Naive thymus-derived CD4-positive, alpha-beta T cell (primary cell): ENCODE measurements at regions of chr10 and their contacts with region 1.

Region 1: DNA sequence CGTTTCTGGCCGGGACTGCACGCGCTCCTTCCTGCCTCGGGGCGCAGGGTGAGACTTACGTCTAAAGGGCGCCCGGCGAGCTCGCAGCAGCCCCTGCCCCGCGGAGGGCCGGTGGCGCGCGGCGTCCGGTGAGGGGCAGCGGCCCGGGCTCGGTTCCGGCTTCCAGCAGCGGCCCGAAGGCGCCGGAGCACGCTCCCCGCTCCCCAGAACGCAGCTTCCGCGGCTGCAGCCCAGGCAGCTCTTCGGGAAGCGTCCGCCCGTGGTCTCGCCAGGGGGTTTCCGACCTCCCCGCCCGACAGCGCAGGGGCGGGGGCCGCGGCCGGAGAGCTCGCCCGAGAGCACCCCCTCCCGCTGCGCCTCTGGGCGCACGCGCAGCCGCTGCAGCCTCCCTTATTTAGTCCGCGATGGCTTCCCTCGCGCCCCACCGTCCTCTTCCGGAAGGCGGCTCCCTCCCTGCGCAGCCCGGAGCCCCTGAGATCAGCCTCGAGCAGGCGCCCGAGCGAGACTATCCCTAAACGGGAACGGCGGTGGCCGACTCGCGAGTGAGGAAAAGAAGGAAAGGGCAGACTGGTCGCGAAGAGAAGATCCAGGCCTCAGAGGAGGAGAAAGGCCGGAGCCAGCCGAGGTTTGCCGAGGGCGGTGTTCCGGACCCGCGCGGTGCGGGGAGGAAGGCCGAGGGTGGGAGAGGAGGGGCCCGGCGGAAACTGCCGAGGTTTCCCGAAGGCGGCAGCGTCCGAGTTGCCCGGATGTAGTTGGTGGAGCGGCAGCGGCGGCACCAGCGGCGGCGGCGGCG is at the start of gene WAC:
- DNase-seq: peak; percentile 93 to 99 (median 97)
- ATAC-seq: peak; percentile 89
- H3K4me3 ChIP-seq: peak within 1 kb of the TSS; percentile 94
- H3K4me3 Mint-ChIP-seq: peak within 1 kb of the TSS; percentile 97 to 99 (median 99)
- H3K27ac ChIP-seq: peak within 1 kb of the TSS; percentile 98
- H3K27ac Mint-ChIP-seq: peak within 1 kb of the TSS; percentile 99 to 100 (median 100)
- H3K4me1 ChIP-seq: peaks cover 25 to 34% of the 10 kb centered on the region in 2 donors
- H3K4me1 Mint-ChIP-seq: peaks cover 43 to 78% (median 71%) of the 10 kb centered on the region in 7 donors
- H3K27me3 ChIP-seq: no peaks in the 10 kb centered on the region
- H3K27me3 Mint-ChIP-seq: peaks cover 0 to 2% (median 0%) of the 10 kb centered on the region in 5 donors
- total RNA-seq, gene WAC: 143 to 184 (median 179) TPM

Region 2: DNA sequence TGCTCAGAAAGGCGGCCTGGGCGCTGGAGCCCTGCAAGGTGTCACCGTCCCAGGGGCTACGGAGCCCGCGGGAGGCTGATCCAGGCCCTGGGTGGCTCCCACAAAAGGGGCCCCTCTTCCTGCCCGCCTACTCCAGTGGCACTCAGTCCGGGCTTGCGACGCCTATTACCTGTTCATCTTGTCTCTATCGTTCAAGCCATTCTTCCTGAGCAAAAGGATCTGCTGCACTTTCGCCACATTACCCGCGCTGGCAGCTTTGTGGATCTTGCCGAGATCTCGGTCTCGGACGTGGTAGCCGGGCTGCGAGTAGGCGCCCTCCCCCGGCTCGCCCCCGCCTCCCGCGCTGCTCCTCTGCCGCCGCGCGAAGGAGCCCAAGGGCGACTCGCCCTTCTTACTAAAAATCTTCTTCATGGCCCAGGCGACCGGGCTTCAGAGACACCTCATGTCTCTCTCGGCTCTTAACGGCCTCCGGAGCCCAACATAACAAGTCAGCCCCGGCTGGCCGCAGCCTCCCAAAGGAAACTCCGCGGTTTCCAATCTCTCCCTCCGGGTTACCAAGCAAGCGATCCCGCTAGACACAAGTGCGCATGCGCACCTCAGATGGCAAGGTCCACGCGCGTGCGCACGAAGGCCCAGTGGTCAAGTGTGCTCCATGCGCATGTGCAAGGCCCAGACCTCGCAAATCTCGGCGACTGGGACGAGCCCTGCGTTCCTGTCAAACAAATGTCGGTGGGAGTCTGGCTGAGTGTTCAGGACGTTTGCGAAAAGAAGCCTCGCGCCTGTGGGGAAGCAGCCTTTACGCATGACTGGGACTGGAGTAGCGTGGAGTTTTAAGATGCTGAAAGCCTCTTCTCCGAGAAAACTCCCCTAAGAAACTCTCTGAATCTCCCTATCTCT is 1432.4 kb before region 1 on chr10 and contains the start of gene ANKRD26:
- CTCF ChIA-PET with region 1: no interaction called
- POLR2A ChIA-PET with region 1: no interaction called
- intact Hi-C with region 1: loop called in 1 of 2 experiments (anchors 2 kb)
- DNase-seq: peak; percentile 92 to 97 (median 95)
- ATAC-seq: peak; percentile 76
- H3K4me3 ChIP-seq: peak within 1 kb of the TSS; percentile 89
- H3K4me3 Mint-ChIP-seq: peak within 1 kb of the TSS; percentile 86 to 97 (median 92)
- H3K27ac ChIP-seq: peak within 1 kb of the TSS; percentile 84
- H3K27ac Mint-ChIP-seq: peak within 1 kb of the TSS; percentile 92 to 99 (median 98)
- H3K4me1 ChIP-seq: peaks cover 18 to 28% of the 10 kb centered on the region in 2 donors
- H3K4me1 Mint-ChIP-seq: peaks cover 30 to 64% (median 51%) of the 10 kb centered on the region in 7 donors
- H3K27me3 ChIP-seq: no peaks in the 10 kb centered on the region
- H3K27me3 Mint-ChIP-seq: peaks cover 0 to 2% (median 0%) of the 10 kb centered on the region in 5 donors
- total RNA-seq, gene ANKRD26: 6.4 to 14.2 (median 8.9) TPM

Region 3: DNA sequence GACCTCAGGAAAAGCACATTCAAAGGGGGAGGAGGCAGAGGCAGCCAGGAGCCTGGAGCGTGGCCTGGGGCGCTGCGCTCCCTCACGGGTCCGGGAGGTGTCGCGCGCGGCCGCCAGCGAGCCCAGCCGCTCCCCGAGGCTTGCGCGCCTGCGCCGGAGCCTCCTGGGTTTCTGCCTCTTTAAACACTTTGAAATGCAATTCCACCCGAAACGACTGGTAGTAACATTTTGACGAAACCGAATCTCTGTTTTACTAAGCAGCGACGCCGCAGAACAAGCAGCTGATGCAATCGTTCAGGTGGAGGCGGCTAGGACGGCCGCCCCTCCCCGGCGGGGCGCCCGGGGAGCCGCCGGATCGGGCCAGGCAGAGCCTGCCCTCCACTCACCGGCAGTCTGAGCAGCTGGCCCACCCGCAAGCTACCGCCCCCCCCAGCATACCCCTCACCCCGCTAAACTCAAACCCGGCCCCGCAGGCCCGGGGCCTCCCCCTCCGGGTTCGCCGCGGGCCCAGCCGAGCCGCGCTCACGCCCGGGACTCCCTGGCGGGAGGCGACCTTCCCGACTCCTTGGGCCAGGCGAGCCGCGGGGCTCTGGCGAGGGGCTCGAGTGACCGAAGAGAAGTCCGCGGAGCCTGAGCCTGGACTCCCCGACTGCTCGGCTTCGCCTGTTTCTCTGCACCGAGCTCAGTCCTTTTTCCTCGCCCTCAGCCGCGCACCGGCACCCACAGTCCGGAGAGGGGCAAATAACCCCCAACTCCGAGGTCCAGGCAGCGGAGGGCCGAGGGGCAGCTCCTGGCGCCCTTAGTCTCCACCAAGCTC is 790.2 kb before region 1 on chr10:
- CTCF ChIA-PET with region 1: interaction called, 3 read pairs
- POLR2A ChIA-PET with region 1: no interaction called
- intact Hi-C with region 1: loop called (anchors 2 to 5 kb)
- DNase-seq: peak; percentile 58 to 82 (median 77)
- ATAC-seq: peak; percentile 87
- H3K4me3 ChIP-seq: peak overlapping the region; percentile 73
- H3K4me3 Mint-ChIP-seq: peak overlapping the region; percentile 70 to 96 (median 86)
- H3K27ac ChIP-seq: no peak overlapping the region
- H3K27ac Mint-ChIP-seq: peak overlapping the region in 1 of 9 donors; percentile 20
- H3K4me1 ChIP-seq: peaks cover 27 to 42% of the 10 kb centered on the region in 2 donors
- H3K4me1 Mint-ChIP-seq: peaks cover 23 to 44% (median 29%) of the 10 kb centered on the region in 7 donors
- H3K27me3 ChIP-seq: peaks cover 16 to 55% of the 10 kb centered on the region in 2 donors
- H3K27me3 Mint-ChIP-seq: peaks cover 51 to 82% (median 65%) of the 10 kb centered on the region in 5 donors

Region 4: GRCh38 chr10:28334296-28334695 is 198.3 kb before region 1 on chr10:
- CTCF ChIA-PET with region 1: no interaction called
- POLR2A ChIA-PET with region 1: interaction called, 3 read pairs
- intact Hi-C with region 1: loop called (anchors 1 kb)
- DNase-seq: peak in 8 of 9 donors; percentile 32 to 95 (median 91)
- ATAC-seq: peak; percentile 83
- H3K4me3 ChIP-seq: peak overlapping the region; percentile 62
- H3K4me3 Mint-ChIP-seq: peak overlapping the region; percentile 72 to 97 (median 91)
- H3K27ac ChIP-seq: peak overlapping the region; percentile 98
- H3K27ac Mint-ChIP-seq: peak overlapping the region; percentile 96 to 100 (median 99)
- H3K4me1 ChIP-seq: peaks cover 33 to 56% of the 10 kb centered on the region in 2 donors
- H3K4me1 Mint-ChIP-seq: peaks cover 44 to 88% (median 71%) of the 10 kb centered on the region in 7 donors
- H3K27me3 ChIP-seq: no peaks in the 10 kb centered on the region
- H3K27me3 Mint-ChIP-seq: peaks cover 0 to 9% (median 0%) of the 10 kb centered on the region in 5 donors

Region 5: GRCh38 chr10:28508304-28508925 is 24.2 kb before region 1 on chr10:
- CTCF ChIA-PET with region 1: no interaction called
- POLR2A ChIA-PET with region 1: no interaction called
- intact Hi-C with region 1: loop called in 1 of 2 experiments (anchors 2 kb)
- DNase-seq: no peak
- ATAC-seq: no peak
- H3K4me3 ChIP-seq: no peak overlapping the region
- H3K4me3 Mint-ChIP-seq: no peak overlapping the region
- H3K27ac ChIP-seq: no peak overlapping the region
- H3K27ac Mint-ChIP-seq: no peak overlapping the region
- H3K4me1 ChIP-seq: no peaks in the 10 kb centered on the region
- H3K4me1 Mint-ChIP-seq: peaks cover 0 to 5% (median 0%) of the 10 kb centered on the region in 7 donors
- H3K27me3 ChIP-seq: no peaks in the 10 kb centered on the region
- H3K27me3 Mint-ChIP-seq: peaks cover 0 to 14% (median 0%) of the 10 kb centered on the region in 5 donors

Region 6: DNA sequence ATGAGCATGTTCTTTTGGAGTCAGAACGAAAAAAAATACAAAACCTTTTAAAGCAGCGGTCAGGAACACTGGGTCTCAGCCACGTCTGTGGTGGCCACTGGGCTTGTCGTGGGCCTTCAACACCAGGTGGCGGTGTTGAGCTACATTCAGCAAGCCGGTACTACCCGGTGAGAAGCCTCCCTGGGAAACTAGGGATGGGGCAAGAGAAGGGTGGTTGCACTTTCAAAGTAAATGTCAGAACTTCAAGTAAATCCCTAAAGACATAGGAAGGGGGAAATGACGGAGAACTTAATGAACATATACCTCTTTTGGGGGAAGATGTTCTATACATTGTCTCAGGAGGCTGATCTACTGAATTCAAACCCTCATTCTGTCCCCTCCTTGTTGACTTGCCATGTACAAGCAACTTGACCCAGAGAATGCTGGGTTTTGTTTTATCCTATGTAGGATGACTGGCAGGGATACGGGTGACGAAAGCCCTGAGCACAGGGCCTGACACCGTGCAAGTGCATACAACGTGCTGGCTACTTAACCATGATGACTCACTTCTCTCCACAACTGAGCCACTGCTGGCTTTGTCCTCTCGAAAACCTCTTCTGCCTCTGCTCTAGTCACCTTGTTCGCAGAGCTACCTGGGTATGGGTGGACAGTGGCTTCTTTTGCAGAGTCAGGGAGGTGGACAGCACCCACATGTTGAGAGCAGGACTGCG is 95.8 kb after region 1 on chr10:
- CTCF ChIA-PET with region 1: no interaction called
- POLR2A ChIA-PET with region 1: no interaction called
- intact Hi-C with region 1: no loop called
- DNase-seq: peak; percentile 16 to 58 (median 39)
- ATAC-seq: peak; percentile 85
- H3K4me3 ChIP-seq: no peak overlapping the region
- H3K4me3 Mint-ChIP-seq: no peak overlapping the region
- H3K27ac ChIP-seq: no peak overlapping the region
- H3K27ac Mint-ChIP-seq: no peak overlapping the region
- H3K4me1 ChIP-seq: no peaks in the 10 kb centered on the region
- H3K4me1 Mint-ChIP-seq: peaks cover 0 to 13% (median 5%) of the 10 kb centered on the region in 7 donors
- H3K27me3 ChIP-seq: no peaks in the 10 kb centered on the region
- H3K27me3 Mint-ChIP-seq: peaks cover 10 to 35% (median 20%) of the 10 kb centered on the region in 5 donors

Region 7: GRCh38 chr10:28676968-28677887 is 144.6 kb after region 1 on chr10 and contains the start of gene BAMBI:
- CTCF ChIA-PET with region 1: no interaction called
- POLR2A ChIA-PET with region 1: no interaction called
- intact Hi-C with region 1: loop called (anchors 1 kb)
- DNase-seq: peak; percentile 86 to 95 (median 90)
- ATAC-seq: peak; percentile 97
- H3K4me3 ChIP-seq: peak within 1 kb of the TSS; percentile 57
- H3K4me3 Mint-ChIP-seq: peak within 1 kb of the TSS; percentile 79 to 94 (median 84)
- H3K27ac ChIP-seq: no peak within 1 kb of the TSS
- H3K27ac Mint-ChIP-seq: peak within 1 kb of the TSS in 3 of 9 donors; percentile 24 to 52 (median 43)
- H3K4me1 ChIP-seq: peaks cover 0 to 26% of the 10 kb centered on the region in 2 donors
- H3K4me1 Mint-ChIP-seq: peaks cover 19 to 32% (median 26%) of the 10 kb centered on the region in 7 donors
- H3K27me3 ChIP-seq: peaks cover 11 to 20% of the 10 kb centered on the region in 2 donors
- H3K27me3 Mint-ChIP-seq: peaks cover 63 to 80% (median 70%) of the 10 kb centered on the region in 5 donors
- total RNA-seq, gene BAMBI: 0.12 to 1.6 (median 0.80) TPM in 4 of 5 experiments, not detected in the other